ENCODE measurements at regions of chr15 and their contacts with region 1.

Region 1: DNA sequence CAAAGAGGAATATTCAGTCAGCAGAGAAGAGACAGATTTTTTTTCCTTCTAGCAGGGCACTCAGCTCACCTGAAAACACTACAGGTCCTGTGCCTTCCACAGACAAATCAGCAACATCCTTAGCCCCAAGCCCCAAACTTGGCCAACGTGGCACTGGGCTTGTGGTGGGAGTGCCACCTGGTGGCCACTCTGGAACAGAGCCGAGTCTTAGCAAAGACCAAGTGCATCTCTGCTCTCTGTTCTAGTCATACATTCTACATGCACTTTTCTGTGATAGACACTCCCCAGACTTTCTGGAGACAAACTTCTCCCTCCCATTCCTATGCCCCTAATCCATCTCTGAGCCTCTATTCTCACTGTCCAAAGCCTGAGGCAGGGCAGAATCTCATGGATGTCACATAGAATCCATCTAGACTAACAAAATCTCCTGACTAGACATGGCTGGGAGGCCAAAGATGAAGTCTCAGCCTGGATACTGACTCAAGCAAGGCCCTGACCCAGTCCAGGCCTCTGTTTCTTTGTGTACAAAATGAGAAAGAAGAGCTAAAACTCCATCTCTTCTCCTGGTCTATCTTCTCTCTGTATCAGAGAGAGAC is 5.1 kb upstream of the SEMA7A start:
- DNase-seq: peak; percentile 94
- H3K4me3 ChIP-seq: no peak overlapping the region
- H3K27ac ChIP-seq: no peak overlapping the region
- H3K4me1 ChIP-seq: peaks cover 6 to 72% (median 32%) of the 10 kb centered on the region in 6 donors
- H3K27me3 ChIP-seq: no peaks in the 10 kb centered on the region
- CTCF ChIP-seq: peak; percentile 85 to 96 (median 94)
- POLR2A ChIP-seq: no peak

Region 2: DNA sequence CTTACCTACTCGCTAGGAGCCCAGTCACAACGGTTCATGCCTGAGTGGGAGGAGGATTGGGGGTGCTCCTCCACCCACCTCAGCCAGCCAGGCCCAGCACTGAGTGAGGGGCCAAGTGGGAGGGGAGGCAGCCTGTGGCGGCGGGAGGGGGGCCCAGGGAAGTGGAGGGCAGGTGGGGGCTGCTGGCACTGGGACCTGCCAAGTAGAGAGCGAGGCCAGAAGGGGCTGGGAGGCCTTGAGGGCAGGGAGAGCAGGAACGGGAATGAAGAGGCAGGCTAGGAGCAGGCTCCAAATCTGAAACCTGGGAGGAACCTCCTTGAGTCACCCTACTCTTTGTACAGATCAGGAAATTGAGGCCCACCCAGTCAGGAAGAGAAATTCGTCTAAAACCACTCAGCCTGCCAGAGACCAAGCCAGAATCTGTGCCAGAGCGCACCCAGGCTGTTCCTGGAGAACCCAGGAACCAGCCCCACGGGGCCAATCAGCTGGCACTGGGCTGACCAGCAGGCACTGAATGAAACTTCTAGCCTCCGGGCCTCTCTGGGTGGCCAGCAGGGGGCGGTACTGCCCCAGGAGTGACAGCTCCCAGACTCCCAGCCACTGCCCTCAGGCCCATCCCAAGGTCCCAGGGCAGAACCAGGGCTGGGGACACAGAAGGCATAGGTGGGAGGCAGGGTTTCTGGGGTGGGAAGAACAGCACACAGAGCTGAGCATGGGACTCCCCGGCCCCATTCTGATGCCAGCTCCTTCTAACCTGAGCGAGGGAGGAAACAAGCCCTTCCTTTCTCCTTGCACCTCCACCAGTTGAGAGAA is 56.6 kb before region 1 on chr15:
- intact Hi-C with region 1: loop called (anchors 2 kb)
- DNase-seq: peak; percentile 96
- H3K4me3 ChIP-seq: no peak overlapping the region
- H3K27ac ChIP-seq: peak overlapping the region in 1 of 8 donors; percentile 88
- H3K4me1 ChIP-seq: peaks cover 49 to 65% (median 57%) of the 10 kb centered on the region in 6 donors
- H3K27me3 ChIP-seq: no peaks in the 10 kb centered on the region
- CTCF ChIP-seq: peak; percentile 92 to 99 (median 97)
- POLR2A ChIP-seq: no peak

Measured in spleen (tissue), 13 donors.